Panc1 (cell line): ENCODE measurements at regions of chr1 and their contacts with region 1.

Region 1: DNA sequence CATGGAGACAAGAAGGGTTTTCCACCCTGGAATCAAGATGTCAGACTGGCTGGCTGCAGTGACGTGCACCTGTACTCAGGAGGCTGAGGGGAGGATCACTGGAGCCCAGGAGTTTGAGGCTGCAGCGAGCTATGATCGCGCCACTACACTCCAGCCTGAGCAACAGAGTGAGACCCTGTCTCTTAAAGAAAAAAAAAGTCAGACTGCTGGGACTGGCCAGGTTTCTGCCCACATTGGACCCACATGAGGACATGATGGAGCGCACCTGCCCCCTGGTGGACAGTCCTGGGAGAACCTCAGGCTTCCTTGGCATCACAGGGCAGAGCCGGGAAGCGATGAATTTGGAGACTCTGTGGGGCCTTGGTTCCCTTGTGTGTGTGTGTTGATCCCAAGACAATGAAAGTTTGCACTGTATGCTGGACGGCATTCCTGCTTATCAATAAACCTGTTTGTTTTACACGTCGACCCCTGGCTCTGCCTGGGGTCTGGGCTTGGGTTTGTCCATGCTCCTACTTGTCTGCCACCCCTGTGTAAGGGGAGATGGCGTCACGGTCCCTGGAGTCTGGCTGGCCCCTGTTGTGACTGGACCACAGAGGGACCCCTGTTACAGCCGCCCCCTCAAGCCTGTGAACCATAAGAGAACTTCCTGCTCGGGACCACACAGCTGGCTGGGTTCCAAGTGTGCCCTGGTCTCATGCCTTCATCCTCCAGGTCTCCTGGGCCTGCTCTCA is 20.9 kb upstream of the VPS13D start:
- DNase-seq: peak; percentile 59
- ATAC-seq: peak; percentile 91
- H3K4me3 ChIP-seq: no peak overlapping the region
- H3K27ac ChIP-seq: no peak overlapping the region
- H3K4me1 ChIP-seq: peaks cover 7% of the 10 kb centered on the region; the same call in 1 of the 2 replicates
- H3K27me3 ChIP-seq: no peaks in the 10 kb centered on the region
- CTCF ChIP-seq: peak; percentile 93

Region 2: GRCh38 chr1:12124693-12125421 is 84.1 kb before region 1 on chr1:
- CTCF ChIA-PET with region 1: interaction called, 19 read pairs
- POLR2A ChIA-PET with region 1: no interaction called
- in situ Hi-C with region 1: no loop called
- intact Hi-C with region 1: loop called (anchors 1 kb)
- DNase-seq: peak; percentile 76
- ATAC-seq: peak; percentile 69
- H3K4me3 ChIP-seq: no peak overlapping the region
- H3K27ac ChIP-seq: no peak overlapping the region
- H3K4me1 ChIP-seq: no peaks in the 10 kb centered on the region
- H3K27me3 ChIP-seq: no peaks in the 10 kb centered on the region
- CTCF ChIP-seq: peak; percentile 98

Region 3: DNA sequence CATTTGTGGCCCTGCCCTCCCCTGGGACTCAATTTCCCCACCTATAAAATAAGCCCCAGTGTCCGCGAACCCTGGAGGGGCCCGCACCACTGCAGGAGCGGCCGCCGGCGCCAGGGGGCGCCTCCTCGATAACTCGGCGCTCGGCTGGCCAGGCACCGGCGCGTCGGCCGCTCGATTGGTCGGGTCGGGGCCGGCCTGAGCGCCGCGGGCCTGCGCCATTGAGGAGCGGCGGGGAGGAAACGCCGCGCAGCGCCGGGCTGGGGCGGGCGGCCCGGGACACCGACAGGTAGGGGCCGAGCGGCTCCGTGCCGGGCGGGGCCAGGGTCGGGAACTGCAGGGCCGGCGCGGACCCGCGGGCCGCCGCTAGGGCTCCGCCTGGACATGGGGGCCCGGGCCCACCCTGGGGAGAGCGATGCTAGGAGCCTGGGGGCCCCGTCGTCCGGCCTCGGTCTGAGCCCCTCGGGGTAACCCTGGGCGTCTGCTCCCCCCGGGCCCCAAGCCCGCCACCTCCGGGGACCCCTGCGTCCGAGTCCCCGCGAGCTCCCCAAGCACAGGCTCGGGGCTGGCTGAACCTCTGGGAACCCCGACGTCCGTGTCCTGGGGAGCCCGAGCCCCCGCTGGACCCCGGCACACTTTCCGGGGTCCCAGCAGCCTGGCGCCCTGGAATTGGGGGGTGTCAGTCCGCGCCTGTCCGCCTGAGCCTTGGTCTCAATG is 21.1 kb after region 1 on chr1 and contains the start of gene VPS13D:
- CTCF ChIA-PET with region 1: interaction called, 14 read pairs
- POLR2A ChIA-PET with region 1: no interaction called
- in situ Hi-C with region 1: no loop called
- intact Hi-C with region 1: no loop called
- DNase-seq: no peak
- ATAC-seq: peak; percentile 94
- H3K4me3 ChIP-seq: peak within 1 kb of the TSS; percentile 72 to 87
- H3K27ac ChIP-seq: peak within 1 kb of the TSS; percentile 81
- H3K4me1 ChIP-seq: peaks cover 10% of the 10 kb centered on the region; the same call in 1 of the 2 replicates
- H3K27me3 ChIP-seq: no peaks in the 10 kb centered on the region
- CTCF ChIP-seq: peak; percentile 99
- total RNA-seq, gene VPS13D: 33.1 TPM